ENCODE measurements at regions of chr12 and their contacts with region 1.

Region 1: DNA sequence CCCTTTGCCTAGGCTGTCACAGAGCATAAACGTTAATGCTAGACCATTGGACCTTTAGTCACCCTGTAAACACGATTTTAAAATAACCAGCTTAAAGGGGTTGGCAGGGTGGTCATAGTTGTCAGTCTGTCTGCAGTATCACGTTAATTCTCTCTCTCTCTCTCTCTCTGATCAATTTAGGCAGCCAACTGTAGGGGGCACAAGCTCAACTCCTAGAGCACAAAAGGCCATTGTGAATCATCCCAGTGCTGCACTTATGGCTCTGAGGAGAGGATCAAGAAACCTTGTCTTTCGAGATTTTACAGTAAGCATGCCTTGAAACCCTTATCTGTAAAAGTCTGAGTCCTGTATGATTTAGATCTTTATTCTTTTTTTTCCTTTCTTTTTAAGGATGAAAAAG is 97.1 kb downstream of the SCAF11 start:
- DNase-seq: no peak
- ATAC-seq: no peak
- H3K4me3 ChIP-seq: no peak overlapping the region
- H3K4me3 Mint-ChIP-seq: no peak overlapping the region
- H3K27ac ChIP-seq: no peak overlapping the region
- H3K27ac Mint-ChIP-seq: peak overlapping the region in 1 of 2 donors; percentile 52
- H3K4me1 ChIP-seq: peaks cover 8 to 32% of the 10 kb centered on the region in 2 experiments
- H3K4me1 Mint-ChIP-seq: peaks cover 30 to 58% (median 33%) of the 10 kb centered on the region in 3 donors
- H3K27me3 ChIP-seq: no peaks in the 10 kb centered on the region
- H3K27me3 Mint-ChIP-seq: no peaks in the 10 kb centered on the region

Region 2: DNA sequence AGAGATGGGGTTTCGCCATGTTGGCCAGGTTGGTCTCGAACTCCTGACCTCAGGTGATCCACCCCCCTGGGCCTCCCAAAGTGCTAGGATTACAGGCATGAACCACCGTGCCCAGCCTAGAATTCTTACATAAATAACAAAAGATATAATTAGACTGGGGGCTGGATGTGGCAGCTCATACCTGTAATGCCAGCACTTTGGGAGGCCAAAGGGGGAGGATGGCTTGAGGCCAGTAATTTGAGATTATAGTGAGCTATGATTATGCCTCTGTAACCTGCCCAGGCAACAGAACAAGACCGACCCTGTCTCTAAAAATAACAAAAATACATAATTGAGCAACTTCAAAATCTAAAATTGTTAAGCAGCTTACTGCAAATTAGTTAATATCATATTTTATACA is 33.3 kb before region 1 on chr12:
- CTCF ChIA-PET with region 1: no interaction called
- POLR2A ChIA-PET with region 1: interaction called in 1 of 2 experiments, 11 read pairs
- DNase-seq: no peak
- ATAC-seq: no peak
- H3K4me3 ChIP-seq: no peak overlapping the region
- H3K4me3 Mint-ChIP-seq: no peak overlapping the region
- H3K27ac ChIP-seq: no peak overlapping the region
- H3K27ac Mint-ChIP-seq: no peak overlapping the region
- H3K4me1 ChIP-seq: no peaks in the 10 kb centered on the region
- H3K4me1 Mint-ChIP-seq: peaks cover 0 to 7% (median 7%) of the 10 kb centered on the region in 3 donors
- H3K27me3 ChIP-seq: no peaks in the 10 kb centered on the region
- H3K27me3 Mint-ChIP-seq: no peaks in the 10 kb centered on the region

Region 3: GRCh38 chr12:45944771-45945170 is 51.5 kb after region 1 on chr12:
- CTCF ChIA-PET with region 1: no interaction called
- POLR2A ChIA-PET with region 1: no interaction called
- DNase-seq: no peak
- ATAC-seq: no peak
- H3K4me3 ChIP-seq: no peak overlapping the region
- H3K4me3 Mint-ChIP-seq: no peak overlapping the region
- H3K27ac ChIP-seq: no peak overlapping the region
- H3K27ac Mint-ChIP-seq: peak overlapping the region; percentile 16 to 40
- H3K4me1 ChIP-seq: no peaks in the 10 kb centered on the region
- H3K4me1 Mint-ChIP-seq: peaks cover 14 to 27% (median 20%) of the 10 kb centered on the region in 3 donors
- H3K27me3 ChIP-seq: no peaks in the 10 kb centered on the region
- H3K27me3 Mint-ChIP-seq: no peaks in the 10 kb centered on the region